Sciatic nerve (tissue), 2 donors: ENCODE measurements at regions of chr18 and their contacts with region 1.

Region 1: DNA sequence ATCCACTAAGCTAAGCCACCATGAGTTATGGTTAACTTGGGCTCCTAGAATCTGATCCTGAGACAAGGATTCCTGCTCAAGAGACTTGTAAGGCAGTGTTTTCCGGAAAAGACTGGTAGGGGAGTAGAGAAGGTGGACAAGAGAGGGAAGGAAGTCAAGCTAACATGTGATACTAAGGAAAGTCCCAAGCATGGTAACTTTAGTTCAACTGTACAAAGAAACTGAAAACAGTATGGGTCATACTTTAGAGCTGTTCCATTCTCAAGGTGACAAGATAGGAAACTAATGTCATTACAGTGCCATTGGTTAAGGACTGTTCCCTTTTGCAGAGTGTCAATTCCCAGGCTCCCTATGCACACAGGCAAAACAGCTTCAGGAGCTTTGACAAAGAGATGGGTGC is 5.8 kb downstream of the MYO5B start:
- DNase-seq: no peak
- ATAC-seq: no peak

Region 2: DNA sequence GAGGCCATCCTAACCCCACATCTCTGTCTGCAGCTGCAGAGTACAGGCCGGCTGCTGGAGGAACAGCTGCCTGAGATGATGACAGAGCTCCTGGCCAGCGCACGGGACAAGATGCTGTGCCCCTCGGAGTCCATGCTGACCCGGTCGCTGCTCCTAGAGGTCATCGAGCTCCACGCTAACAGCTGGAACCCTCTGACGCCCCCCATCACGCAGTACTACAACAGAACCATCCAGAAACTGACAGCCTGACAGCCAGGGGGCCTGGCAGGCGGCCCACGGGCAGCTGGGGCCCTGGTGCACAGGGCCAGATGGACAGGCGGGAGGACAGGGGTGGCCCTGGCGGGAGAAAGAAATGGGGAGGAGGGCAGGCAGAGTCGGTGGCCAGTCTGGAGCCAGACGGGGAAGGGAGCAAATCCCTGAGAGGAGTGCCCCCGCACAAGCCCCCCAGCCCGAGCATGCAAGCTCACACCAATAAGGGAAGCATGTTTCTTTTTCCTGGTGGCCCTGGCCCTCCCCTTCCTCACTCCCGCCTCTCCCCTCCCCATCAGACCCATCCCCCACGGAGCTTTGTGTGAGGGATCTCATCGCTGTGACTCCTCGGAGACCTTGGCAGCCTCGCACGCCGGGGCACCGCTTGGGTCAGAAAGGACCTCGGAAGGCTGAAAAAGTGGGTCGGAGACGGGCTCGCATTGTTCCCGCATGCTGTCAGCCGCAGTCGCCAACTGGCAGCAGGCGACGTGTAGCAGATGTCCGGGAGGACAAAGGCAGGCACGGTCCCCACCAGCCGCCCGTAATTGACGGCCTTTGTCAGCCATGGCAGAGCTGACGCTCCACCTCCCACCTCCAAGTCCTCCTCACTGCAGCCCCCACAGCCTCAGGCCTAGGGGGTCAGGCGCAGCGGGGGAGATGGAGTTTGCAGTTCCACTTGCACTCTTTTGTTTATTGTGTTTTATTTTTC is 1329.6 kb before region 1 on chr18:
- intact Hi-C with region 1: loop called (anchors 5 kb)
- DNase-seq: no peak
- ATAC-seq: peak; percentile 6

Region 3: GRCh38 chr18:50170004-50170403 is 19.2 kb before region 1 on chr18:
- intact Hi-C with region 1: no loop called
- DNase-seq: no peak
- ATAC-seq: no peak

Region 4: DNA sequence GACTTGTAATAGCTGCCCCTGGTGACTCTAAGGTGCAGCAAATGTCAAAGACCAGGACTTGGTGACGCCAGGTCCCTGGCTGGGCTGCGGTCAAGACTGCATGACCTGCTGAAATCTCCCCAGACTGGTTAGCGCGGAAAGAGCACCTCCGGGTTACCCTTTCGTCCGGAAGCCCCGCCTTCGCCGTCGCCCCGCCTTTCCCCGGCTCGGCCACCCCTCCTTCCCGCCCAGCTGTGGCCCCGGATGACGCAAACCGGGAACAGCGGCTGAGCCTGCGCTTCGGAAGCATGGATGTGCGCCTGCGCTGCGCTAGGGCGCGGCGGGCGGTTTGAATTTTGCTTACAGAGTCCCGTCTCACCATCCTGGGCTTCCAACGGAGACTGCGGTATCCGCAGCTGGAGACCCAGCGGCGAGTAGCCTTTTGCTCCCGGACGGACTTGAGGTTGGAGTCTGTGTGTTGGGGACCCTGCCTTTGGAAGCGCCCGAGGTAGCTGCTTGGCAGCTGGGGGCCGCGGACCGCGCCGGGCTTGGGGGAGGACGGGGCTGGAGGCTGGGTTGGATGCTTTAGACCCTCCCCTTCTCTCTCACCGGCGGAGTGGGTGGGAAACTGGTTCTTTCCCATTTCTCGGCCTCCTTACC is 185.7 kb after region 1 on chr18 and contains the start of gene SKA1:
- intact Hi-C with region 1: no loop called
- DNase-seq: peak; percentile 95
- ATAC-seq: peak; percentile 100
- total RNA-seq, gene SKA1: 0.36 TPM